Transverse colon (tissue), 4 donors: ENCODE measurements at regions of chr1 and their contacts with region 1.

Region 1: GRCh38 chr1:16009030-16009709 is 5.1 kb downstream of the SRARP start:
- DNase-seq: peak; percentile 82
- H3K4me3 ChIP-seq: no peak overlapping the region
- H3K27ac ChIP-seq: no peak overlapping the region
- H3K4me1 ChIP-seq: peaks cover 12 to 19% (median 19%) of the 10 kb centered on the region in 4 donors
- H3K27me3 ChIP-seq: no peaks in the 10 kb centered on the region
- CTCF ChIP-seq: peak; percentile 94 to 98 (median 96)
- EP300 ChIP-seq: no peak
- POLR2A ChIP-seq: no peak

Region 2: GRCh38 chr1:15627343-15627988 is 381.7 kb before region 1 on chr1:
- in situ Hi-C with region 1: no loop called
- intact Hi-C with region 1: no loop called
- DNase-seq: no peak
- H3K4me3 ChIP-seq: no peak overlapping the region
- H3K27ac ChIP-seq: no peak overlapping the region
- H3K4me1 ChIP-seq: peaks cover 6 to 32% (median 14%) of the 10 kb centered on the region in 4 donors
- H3K27me3 ChIP-seq: no peaks in the 10 kb centered on the region
- CTCF ChIP-seq: no peak
- EP300 ChIP-seq: no peak
- POLR2A ChIP-seq: no peak

Region 3: DNA sequence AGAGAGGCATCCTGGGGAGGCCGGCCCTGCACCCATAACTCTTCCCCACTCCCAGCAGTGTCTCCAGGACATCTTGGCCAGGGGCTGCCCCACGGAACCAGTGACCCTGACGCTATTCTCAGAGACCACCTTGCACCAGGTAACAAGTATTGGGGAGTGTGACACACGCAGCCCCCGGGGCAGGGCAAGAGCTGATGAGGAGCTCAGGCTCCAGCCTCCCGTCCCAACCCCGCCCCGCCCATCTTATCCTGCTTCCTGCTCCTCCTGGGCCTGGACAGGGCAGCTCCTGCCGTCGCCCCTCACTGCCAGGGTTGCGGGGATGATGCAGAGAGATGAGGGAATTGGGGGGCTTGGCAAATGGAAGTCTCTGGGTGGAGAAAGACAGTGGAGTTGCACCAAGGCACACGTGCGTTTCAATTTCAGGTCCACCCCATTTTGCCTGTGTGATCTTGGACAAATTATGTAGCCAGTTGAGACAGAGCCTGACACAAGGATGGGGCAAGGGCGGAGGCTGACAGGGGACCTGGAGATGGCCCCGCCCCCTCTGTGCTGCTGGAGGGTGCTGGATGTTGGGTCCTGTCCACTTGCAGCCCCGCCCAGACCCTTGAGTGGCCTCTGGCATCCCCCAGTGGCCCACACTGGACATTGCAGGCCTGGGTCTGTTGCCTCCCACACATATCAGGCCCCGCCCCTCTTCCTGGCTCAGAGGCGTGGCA is 23.4 kb after region 1 on chr1:
- in situ Hi-C with region 1: no loop called
- intact Hi-C with region 1: loop called (anchors 2 kb)
- DNase-seq: peak; percentile 84
- H3K4me3 ChIP-seq: no peak overlapping the region
- H3K27ac ChIP-seq: no peak overlapping the region
- H3K4me1 ChIP-seq: peaks cover 3 to 7% (median 5%) of the 10 kb centered on the region in 4 donors
- H3K27me3 ChIP-seq: peaks cover 13% of the 10 kb centered on the region
- CTCF ChIP-seq: peak; percentile 92 to 99 (median 96)
- EP300 ChIP-seq: no peak
- POLR2A ChIP-seq: no peak

Region 4: DNA sequence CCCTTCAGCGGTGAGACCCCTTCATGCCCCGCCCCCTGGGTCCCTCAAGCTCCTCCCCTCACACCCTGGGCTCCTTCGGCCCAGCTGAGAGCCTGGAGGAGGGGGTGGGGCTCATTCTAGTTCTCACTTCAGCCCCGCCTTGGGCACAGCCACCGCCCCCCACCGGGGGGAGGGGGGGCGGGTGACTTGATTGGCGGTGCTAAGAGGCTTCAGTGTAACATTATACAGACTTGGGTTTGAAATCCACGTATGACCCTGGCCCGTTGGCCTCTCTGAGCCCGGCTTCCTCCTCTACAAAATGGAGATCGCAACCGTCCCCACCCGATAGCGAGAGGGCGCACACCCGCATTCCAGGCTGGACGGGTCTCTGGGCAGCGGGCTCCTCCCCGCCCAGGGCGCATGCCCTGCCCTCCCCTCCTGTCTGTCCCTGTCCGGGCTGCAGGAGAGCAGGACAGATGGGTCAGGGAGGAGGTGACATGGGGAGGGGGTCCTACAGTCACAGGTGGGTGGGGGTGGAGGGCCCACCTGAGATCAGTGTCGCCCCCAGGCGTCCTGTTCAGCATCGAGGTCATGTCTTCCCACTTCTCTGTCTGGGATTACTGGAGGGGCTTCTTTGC is 39.5 kb after region 1 on chr1:
- in situ Hi-C with region 1: loop called in 1 of 4 experiments (anchors 5 kb)
- intact Hi-C with region 1: no loop called
- DNase-seq: peak; percentile 44
- H3K4me3 ChIP-seq: peak overlapping the region; percentile 17 to 39 (median 35)
- H3K27ac ChIP-seq: no peak overlapping the region
- H3K4me1 ChIP-seq: peaks cover 0 to 7% (median 7%) of the 10 kb centered on the region in 4 donors
- H3K27me3 ChIP-seq: no peaks in the 10 kb centered on the region
- CTCF ChIP-seq: no peak
- EP300 ChIP-seq: no peak
- POLR2A ChIP-seq: no peak

Region 5: DNA sequence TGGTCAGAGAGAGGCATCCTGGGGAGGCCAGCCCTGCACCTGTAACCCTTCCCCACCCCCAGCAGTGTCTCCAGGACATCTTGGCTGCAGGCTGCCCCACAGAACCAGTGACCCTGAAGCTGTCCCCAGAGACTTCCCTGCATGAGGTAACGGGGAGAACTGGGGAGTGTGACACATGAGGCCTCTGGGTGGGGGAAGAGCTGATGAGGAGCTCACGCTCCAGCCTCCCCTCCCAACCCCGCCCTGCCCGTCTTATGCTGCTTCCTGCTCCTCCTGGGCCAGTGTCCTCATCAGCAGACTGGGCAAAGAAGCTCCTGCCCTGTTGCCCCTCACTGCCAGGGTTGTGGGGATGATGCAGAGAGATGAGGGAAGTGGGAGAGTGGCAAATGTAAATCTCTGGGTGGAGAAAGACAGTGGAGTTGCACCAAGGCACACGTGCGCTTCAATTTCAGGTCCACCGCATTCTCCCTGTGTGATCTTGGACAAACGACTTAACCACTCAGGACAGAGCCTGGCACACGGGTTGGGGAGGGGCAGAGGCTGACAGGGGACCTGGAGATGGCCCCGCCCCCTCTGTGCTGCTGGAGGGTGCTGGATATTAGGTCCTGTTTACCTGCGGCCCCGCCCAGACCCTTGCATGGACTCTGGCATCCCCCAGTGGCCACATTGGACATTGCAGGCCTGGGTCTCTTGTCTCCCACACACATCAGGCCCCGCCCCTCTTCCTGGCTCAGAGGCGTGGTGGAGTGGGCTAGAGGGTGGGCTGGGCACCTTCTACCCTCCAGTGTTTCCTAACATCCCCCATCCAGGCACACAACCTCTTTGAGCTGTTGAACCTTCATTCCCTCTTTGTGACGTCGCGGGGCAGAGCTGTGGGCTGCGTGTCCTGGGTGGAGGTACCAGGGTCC is 46.7 kb after region 1 on chr1:
- in situ Hi-C with region 1: no loop called
- intact Hi-C with region 1: loop called (anchors 2 kb)
- DNase-seq: peak; percentile 92
- H3K4me3 ChIP-seq: no peak overlapping the region
- H3K27ac ChIP-seq: no peak overlapping the region
- H3K4me1 ChIP-seq: peaks cover 0 to 5% (median 0%) of the 10 kb centered on the region in 4 donors
- H3K27me3 ChIP-seq: peaks cover 4% of the 10 kb centered on the region
- CTCF ChIP-seq: peak; percentile 87 to 99 (median 96)
- EP300 ChIP-seq: no peak
- POLR2A ChIP-seq: no peak